Astrocyte of the cerebellum (primary cell): ENCODE measurements at regions of chr5 and their contacts with region 1.

Region 1: DNA sequence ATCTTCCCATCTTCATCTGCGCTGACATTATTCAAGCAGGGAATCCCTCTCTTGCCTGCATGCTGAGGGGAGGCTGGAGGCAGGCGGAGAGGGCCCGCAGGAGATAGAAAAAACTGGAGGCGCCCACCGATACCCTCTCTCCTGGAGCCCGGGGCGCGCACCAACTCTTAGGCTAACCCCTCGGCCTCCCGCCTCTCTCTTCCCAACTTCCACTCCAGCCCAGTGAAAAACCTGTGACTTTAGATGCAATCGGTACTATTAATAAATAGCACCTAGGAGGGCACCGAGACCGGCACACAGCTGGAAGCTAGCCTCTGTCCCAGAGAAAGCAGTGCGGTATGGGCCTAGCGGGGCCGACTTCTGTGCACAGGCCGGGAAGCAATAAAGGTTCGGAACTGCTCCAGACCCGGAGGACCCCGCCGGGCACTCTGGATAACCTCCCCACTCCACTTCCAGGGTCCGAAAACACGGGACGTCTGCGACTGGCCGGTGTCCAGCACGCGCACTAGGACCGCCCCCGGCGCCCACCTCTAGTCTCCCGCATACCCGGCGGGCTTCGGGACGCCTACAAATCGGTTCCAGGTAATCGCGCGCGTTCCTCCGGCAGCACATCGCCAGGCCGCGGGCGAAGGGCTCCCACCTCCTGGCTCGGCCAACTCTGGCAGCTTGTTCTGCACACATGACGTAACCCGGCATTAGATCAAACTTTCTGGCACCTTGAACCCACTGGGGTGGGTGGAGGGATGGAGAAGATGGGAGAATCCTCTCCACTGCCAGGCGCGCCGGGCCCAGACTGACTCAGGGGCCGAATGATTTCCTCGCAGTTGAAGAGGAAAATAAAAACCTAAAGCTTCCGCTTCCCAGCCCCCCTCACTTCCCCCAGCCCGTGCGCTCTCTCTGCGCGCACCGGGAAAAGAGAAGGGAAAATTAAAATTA is 1.4 kb downstream of the EFNA5 start:
- DNase-seq: no peak
- H3K4me3 ChIP-seq: peak overlapping the region; percentile 57
- CTCF ChIP-seq: no peak

Region 2: GRCh38 chr5:107594253-107595045 is 74.9 kb before region 1 on chr5:
- in situ Hi-C with region 1: loop called (anchors 10 kb)
- DNase-seq: no peak
- H3K4me3 ChIP-seq: no peak overlapping the region
- CTCF ChIP-seq: no peak